PC-3 (cell line): ENCODE measurements at regions of chr19 and their contacts with region 1.

Region 1: GRCh38 chr19:5292822-5293611 is 47.6 kb downstream of the PTPRS start:
- DNase-seq: peak; percentile 67
- ATAC-seq: peak; percentile 76
- H3K4me3 ChIP-seq: peak overlapping the region; percentile 85
- H3K27ac ChIP-seq: no peak overlapping the region
- H3K4me1 ChIP-seq: peaks cover 13% of the 10 kb centered on the region
- H3K27me3 ChIP-seq: no peaks in the 10 kb centered on the region
- CTCF ChIP-seq: no peak

Region 2: DNA sequence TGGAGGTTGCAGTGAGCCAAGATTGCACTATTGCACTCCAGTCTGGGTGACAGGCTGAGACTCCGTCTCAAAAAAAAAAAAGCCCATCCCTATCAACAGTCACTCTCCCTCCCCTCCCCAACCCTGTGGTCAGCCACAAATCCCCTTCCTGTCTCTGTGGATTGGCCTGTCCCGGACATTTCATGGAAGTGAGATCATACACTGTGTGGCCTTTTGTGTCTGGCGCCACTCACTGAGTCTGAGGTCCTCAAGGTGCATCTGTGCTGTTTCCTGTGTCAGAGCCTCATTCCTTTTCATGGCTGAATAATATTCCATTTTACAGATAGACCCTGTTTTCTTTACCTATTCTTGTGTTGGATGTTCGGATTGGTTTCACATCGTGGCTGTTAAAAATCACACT is 101.9 kb before region 1 on chr19:
- CTCF ChIA-PET with region 1: no interaction called
- POLR2A ChIA-PET with region 1: interaction called, 13 read pairs
- intact Hi-C with region 1: no loop called
- DNase-seq: peak; percentile 49
- ATAC-seq: peak; percentile 57; the same call in 1 of the 2 replicates
- H3K4me3 ChIP-seq: no peak overlapping the region
- H3K27ac ChIP-seq: no peak overlapping the region
- H3K4me1 ChIP-seq: no peaks in the 10 kb centered on the region
- H3K27me3 ChIP-seq: no peaks in the 10 kb centered on the region
- CTCF ChIP-seq: no peak

Region 3: GRCh38 chr19:6963244-6963852 is 1670.3 kb after region 1 on chr19:
- CTCF ChIA-PET with region 1: no interaction called
- POLR2A ChIA-PET with region 1: interaction called, 26 read pairs
- intact Hi-C with region 1: no loop called
- DNase-seq: no peak
- ATAC-seq: no peak
- H3K4me3 ChIP-seq: no peak overlapping the region
- H3K27ac ChIP-seq: no peak overlapping the region
- H3K4me1 ChIP-seq: no peaks in the 10 kb centered on the region
- H3K27me3 ChIP-seq: peaks cover 44% of the 10 kb centered on the region
- CTCF ChIP-seq: no peak